Activated CD4-positive, alpha-beta T cell treated with anti-CD3 and anti-CD28 coated beads, Interleukin-2, amount 10 ng/mL, durations not matched to agents 24 days and 14 days (primary cell): ENCODE measurements at regions of chr4 and their contacts with region 1.

Region 1: DNA sequence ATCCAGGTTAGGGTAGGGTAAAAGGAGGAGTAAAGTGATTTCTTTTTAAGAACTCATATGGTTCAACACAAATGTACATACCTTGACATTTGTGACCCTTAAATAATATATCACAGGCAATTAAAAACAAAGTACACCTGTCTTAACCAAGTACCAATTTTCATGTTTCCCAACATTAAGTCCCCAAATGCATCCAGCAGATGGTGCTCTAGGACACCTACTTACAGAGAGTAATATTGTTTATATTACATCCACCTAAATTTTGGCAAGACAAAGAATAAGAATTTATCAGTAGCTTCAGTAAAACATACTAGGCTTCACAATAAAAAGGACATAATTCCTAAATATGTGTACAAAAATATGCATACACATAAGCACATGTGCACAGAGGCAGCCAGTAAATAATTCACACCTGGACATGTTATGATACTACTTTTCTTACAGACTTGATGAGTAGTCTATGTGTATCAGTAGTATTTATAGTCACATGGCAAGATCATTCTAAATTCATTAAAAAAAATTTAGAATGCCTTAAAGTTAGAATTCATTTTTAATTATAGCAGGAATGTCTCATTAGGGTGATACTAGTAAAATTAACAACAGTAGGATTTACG is 219.7 kb downstream of the DCLK2 start:
- DNase-seq: peak; percentile 78
- H3K4me3 Mint-ChIP-seq: no peak overlapping the region
- H3K27ac Mint-ChIP-seq: no peak overlapping the region
- H3K4me1 Mint-ChIP-seq: peaks cover 7% of the 10 kb centered on the region
- H3K27me3 Mint-ChIP-seq: no peaks in the 10 kb centered on the region

Region 2: DNA sequence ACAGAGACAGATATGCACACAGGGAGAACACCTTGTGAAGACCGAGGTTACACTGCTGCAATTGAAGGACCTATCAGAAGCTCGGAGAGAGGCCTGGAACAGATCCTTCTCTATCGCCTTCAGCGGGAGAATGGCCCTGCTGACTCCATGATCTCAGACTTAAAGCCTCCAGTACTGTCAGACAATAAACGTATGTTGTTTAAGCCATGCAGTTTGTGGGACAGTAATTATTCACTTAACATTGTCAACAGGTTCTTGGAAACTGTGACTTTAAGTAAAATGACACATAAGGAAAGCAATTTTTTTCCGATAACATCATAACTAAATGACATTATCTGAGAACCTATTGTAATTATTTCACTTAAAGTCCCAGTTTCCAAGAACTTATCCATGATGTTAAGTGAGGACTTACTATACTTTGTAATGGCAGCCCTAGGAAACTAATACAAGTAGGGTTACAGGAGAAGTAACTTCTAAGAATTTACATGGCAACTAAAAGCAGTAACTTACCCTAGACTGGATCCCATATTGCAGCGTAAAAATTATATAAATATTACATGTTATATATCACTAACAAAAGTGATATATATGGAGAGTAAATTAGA is 103.2 kb after region 1 on chr4:
- intact Hi-C with region 1: loop called (anchors 2 kb)
- DNase-seq: no peak
- H3K4me3 Mint-ChIP-seq: no peak overlapping the region
- H3K27ac Mint-ChIP-seq: peak overlapping the region; percentile 66
- H3K4me1 Mint-ChIP-seq: peaks cover 4% of the 10 kb centered on the region
- H3K27me3 Mint-ChIP-seq: no peaks in the 10 kb centered on the region

Region 3: DNA sequence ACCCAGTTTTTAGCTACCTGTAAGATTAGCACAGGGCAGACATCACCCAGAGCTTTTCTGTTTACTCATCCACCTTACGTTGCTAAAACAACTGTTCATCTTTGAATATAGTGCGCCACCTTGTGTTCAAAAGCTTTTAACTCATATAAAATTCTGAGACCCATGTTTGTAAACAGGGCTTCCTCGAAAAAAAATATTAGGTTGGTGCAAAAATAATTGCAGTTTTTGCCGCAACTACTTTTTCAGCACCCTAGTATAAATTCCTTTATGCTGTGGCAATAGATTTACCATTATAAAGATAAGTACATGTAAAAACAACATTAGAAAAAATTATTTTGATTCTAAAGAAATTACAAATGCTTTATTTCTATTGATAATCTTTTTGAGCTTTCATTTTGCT is 569.2 kb after region 1 on chr4:
- intact Hi-C with region 1: loop called (anchors 1 kb)
- DNase-seq: peak; percentile 86
- H3K4me3 Mint-ChIP-seq: no peak overlapping the region
- H3K27ac Mint-ChIP-seq: no peak overlapping the region
- H3K4me1 Mint-ChIP-seq: no peaks in the 10 kb centered on the region
- H3K27me3 Mint-ChIP-seq: no peaks in the 10 kb centered on the region

Region 4: GRCh38 chr4:151031831-151032605 is 734.0 kb after region 1 on chr4:
- intact Hi-C with region 1: loop called (anchors 1 kb)
- DNase-seq: no peak
- H3K4me3 Mint-ChIP-seq: peak overlapping the region; percentile 76
- H3K27ac Mint-ChIP-seq: peak overlapping the region; percentile 93
- H3K4me1 Mint-ChIP-seq: peaks cover 27% of the 10 kb centered on the region
- H3K27me3 Mint-ChIP-seq: no peaks in the 10 kb centered on the region